HEK293T (cell line): ENCODE measurements at regions of chr17 and their contacts with region 1.

Region 1: GRCh38 chr17:76671123-76671911 is 27.8 kb upstream of the ST6GALNAC1 start:
- DNase-seq: peak; percentile 99

Region 2: DNA sequence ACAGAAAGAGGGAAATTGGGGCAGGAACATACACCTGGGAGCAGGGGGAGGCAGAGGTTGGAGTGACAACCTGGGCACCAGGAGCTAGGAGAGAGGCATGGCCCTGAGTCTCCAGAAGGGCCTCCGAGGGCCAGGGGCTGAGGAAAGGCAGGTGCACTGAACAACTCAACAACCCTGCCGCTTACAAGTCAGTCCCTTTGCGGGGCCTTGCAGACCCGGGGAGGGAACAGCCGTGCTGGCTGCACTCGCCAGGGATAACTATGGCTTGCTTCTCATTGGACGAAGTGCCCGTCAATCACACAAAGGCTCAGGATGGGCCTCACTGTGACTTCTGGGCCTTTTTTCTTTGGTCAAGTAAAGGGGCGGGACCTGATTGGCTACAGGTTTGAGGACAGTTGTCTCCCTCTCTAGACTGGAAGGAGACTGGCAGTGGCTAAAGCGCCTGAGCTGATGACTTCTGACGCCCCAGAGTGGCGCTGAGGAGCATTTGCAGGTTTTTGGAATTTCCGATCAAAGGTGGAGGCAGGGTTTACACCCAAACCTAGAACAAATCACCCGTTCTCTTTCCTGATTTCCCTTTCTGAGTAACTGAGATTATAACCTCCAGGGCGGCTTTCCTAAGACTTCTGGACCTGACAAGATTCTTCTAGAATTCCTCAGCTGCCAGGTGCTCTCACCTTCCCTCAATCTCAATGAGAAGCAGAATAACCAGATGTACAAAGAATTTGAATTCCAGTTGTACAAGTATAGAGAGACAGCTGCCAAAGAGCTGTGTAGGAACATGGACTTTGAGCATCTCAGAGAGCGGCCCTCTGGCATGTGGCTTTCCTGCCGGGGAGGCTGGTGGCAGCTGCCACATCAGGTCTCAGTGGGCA is 58.1 kb before region 1 on chr17:
- CTCF ChIA-PET with region 1: no interaction called
- POLR2A ChIA-PET with region 1: interaction called, 10 read pairs
- DNase-seq: peak; percentile 91

Region 3: DNA sequence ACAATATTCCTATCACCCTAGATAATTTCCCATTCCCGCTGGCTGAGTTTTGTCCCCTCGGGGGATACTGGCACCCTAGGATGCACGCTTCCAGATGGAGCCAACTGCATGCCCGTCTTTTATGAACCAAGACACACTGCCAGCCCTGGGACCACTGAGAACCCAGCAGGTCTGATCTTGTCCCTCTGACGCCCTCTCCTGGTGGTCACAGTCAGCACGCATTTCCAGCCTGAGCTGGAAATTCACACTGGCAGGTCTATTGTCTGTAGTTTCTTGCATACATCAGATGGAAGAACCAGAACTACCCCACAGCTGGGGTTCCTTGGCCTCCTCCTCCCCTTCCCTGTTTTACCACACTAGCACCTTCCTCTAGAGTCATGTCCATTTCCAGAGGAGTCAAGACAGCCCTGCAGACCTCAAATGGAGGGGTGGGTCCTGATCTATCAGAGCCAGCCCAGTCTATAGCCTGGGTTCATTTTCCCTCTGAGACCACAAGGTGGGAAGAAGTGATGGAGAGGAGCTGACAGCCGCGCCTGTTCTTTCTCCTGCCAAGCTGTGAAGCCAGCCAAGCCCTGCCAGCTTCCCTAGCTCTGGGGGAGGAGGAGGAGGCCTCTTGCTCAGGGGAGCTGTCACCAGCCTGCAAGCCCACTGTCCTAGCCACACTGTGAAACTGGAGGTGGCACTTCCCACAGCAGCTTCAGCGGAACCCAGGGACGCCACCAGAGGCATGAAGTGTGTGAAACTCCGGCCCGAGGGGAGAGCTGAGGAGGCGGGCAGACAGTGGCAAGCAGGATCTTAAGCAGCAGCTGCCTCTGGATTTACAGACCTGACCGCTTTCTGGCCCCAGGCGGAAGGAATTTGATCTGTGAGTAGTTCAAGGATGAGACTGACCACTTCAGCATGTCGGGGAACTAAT is 10.2 kb after region 1 on chr17:
- CTCF ChIA-PET with region 1: interaction called, 25 read pairs
- POLR2A ChIA-PET with region 1: interaction called, 32 read pairs
- DNase-seq: peak; percentile 78

Region 4: DNA sequence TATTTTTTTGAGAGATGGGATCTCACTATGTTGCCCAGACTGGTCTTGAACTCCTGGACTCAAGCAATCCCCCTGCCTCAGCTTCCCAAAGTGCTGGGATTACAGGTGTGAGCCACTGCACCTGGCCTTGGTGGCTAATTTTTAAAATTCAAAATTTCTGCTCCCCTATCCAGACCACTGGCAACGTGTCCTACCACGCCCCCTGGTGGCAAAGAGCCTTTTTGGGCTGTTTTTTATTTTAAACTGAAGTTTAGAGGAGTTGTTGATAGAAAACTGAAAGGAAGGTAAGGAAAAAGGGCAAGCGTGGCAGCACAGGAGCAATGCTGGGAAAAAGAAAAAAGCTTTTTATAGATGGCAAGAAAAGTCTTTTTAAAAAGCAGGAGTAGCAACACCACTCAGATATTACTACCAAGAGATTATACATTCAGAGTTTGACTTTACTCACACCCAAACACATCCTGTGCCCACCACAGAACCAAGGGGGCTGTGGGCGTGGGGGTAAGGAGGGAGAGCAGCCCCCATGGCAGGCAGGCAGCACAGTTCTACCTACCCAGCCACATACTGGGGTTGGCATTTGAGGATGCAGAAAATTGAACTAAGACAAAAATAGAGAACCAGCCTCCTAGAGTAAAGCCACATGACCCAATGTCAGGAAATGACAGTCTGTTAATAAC is 43.6 kb after region 1 on chr17:
- CTCF ChIA-PET with region 1: interaction called, 3 read pairs
- POLR2A ChIA-PET with region 1: interaction called, 10 read pairs
- DNase-seq: no peak

Region 5: GRCh38 chr17:76793775-76794174 is 122.5 kb after region 1 on chr17:
- CTCF ChIA-PET with region 1: no interaction called
- POLR2A ChIA-PET with region 1: no interaction called
- DNase-seq: peak; percentile 61